Activated B cell treated with CpG ODN at 0.5 μM for 24 hours (primary cell): ENCODE measurements at regions of chr6 and their contacts with region 1.

Region 1: DNA sequence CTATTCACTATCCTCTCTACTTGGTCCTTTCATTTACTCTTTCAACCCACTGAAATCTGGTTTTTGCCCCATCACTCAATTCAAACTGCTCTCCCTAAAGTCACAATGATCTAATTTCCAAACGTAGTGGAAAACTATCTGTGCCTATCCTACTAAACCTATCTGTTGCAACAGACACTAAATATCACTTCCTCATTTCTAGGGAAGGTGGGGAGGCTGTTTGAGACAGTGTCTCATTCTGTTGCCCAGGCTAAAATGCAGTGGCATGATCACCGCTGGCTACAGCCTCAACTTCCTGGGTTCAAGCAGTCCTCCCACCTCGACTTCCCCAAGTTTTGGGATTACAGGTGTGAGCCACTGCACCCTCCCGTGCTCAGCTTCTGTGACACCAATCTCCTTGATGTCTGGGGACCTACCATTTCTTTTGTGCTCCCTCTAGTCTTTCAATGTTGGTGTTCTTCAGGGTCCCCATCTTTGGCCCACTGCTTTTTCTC is 8.8 kb downstream of the RANBP9 start:
- DNase-seq: no peak
- ATAC-seq: peak; percentile 89
- H3K4me3 Mint-ChIP-seq: no peak overlapping the region
- H3K27ac Mint-ChIP-seq: no peak overlapping the region
- H3K4me1 Mint-ChIP-seq: peaks cover 27% of the 10 kb centered on the region
- H3K27me3 Mint-ChIP-seq: no peaks in the 10 kb centered on the region
- CTCF ChIP-seq: no peak

Region 2: DNA sequence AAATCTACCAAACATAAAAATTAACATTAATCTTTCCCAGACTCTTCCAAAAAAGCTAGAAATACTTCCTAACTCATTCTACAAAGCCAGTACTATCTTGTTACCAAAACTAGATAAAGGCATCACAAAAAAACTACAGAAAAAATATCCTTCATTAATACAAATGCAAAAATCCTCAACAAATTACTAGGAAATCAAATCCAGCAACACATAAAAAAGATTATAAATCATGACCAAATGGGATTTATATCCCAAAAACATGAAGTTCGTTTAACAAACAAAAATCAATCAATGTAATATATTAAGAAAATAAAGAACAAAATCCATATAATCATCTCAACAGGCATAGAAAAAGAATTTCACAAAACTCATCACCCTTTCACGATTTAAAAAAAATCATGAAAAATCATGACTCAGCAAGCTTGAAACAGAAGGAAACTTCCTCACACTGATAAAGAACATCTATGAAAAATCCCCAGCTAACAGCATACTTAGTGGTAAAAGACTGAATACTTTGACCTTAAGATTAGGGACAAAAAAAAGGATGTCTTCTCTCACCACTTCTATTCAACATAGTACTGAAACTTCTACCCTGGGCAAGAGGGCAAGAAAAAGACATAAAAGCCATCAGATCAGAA is 34.4 kb before region 1 on chr6:
- CTCF ChIA-PET with region 1: no interaction called
- POLR2A ChIA-PET with region 1: no interaction called
- intact Hi-C with region 1: loop called (anchors 5 kb)
- DNase-seq: no peak
- ATAC-seq: no peak
- H3K4me3 Mint-ChIP-seq: no peak overlapping the region
- H3K27ac Mint-ChIP-seq: no peak overlapping the region
- H3K4me1 Mint-ChIP-seq: peaks cover 74% of the 10 kb centered on the region
- H3K27me3 Mint-ChIP-seq: no peaks in the 10 kb centered on the region
- CTCF ChIP-seq: no peak

Region 3: GRCh38 chr6:13733178-13733887 is 30.5 kb after region 1 on chr6:
- CTCF ChIA-PET with region 1: no interaction called
- POLR2A ChIA-PET with region 1: no interaction called
- intact Hi-C with region 1: no loop called
- DNase-seq: no peak
- ATAC-seq: no peak
- H3K4me3 Mint-ChIP-seq: no peak overlapping the region
- H3K27ac Mint-ChIP-seq: no peak overlapping the region
- H3K4me1 Mint-ChIP-seq: no peaks in the 10 kb centered on the region
- H3K27me3 Mint-ChIP-seq: peaks cover 5% of the 10 kb centered on the region
- CTCF ChIP-seq: no peak